Activated CD4-positive, alpha-beta memory T cell treated with anti-CD3 and anti-CD28 coated beads, Interleukin-2, amount 10 ng/mL, durations not matched to agents 7 days and 5 days (primary cell): ENCODE measurements at regions of chr14 and their contacts with region 1.

Region 1: DNA sequence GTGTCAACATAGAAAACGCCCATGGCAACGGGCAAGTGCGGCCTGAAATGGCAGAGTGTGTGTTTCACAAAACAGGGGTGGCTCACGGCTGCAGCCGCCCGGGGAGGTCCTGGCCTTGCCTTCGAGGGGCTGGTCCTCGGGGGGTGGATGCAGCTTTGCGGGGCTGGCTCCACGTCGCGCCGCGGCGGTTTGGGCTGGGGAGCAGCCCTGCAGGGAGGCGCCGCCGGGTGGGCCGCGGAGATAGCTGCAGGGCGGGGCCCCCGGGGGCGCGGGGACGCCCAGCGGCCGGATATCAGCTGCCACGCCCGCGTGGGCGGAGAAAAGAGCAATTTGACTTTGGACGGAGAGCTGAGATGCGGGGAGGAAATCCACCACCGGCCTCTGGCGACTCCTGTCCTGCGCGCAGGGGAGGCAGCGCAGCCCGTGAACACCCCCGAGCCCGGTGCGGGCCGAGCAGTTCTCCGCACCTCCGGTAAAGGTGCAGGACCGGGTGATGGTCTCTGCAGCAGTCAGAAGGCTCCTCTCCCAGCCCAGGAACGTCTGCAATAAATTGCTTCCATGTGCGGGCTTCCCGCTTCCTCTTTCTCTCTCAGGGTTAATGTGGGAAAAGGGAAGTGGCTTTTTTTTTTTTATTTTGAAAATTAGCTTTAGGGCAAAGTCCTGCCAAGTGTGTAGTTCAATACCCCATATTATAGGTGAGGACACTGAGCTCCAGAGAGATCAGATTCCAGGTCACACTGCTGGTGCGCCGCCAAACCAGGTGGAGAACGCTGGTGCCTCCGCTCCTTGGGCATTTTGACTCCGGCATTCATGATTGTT is 110.5 kb downstream of the ARF6 start:
- DNase-seq: peak; percentile 88
- H3K4me3 Mint-ChIP-seq: peak overlapping the region; percentile 77
- H3K27ac Mint-ChIP-seq: peak overlapping the region; percentile 98
- H3K4me1 Mint-ChIP-seq: peaks cover 76% of the 10 kb centered on the region
- H3K27me3 Mint-ChIP-seq: no peaks in the 10 kb centered on the region

Region 2: DNA sequence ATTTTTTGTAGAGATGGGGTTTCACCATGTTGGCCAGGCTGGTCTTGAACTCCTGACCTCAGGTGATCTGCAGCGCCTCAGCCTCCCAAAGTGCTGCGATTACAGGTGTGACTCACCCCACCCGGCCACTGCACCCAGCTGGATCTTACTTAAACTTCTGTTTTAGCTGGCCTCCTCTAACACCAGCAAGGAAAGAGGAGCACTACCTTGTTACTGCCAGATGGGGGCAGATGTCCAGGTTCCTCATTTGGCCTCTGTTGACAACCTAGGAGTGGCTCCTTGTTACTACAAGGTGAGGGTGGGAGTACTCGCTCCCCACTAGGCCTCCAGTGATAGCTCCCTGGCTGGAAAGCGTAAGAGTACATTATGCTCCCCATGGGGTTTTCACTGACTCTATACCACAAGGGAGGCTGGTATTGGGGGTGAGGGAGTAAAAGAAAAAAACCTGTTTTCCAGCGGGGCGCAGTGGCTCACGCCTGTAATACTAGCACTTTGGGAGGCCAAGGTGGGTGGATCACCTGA is 123.7 kb before region 1 on chr14:
- CTCF ChIA-PET with region 1: interaction called, 9 read pairs
- POLR2A ChIA-PET with region 1: interaction called, 56 read pairs
- DNase-seq: peak; percentile 76
- H3K4me3 Mint-ChIP-seq: no peak overlapping the region
- H3K27ac Mint-ChIP-seq: peak overlapping the region; percentile 50
- H3K4me1 Mint-ChIP-seq: peaks cover 48% of the 10 kb centered on the region
- H3K27me3 Mint-ChIP-seq: no peaks in the 10 kb centered on the region

Region 3: DNA sequence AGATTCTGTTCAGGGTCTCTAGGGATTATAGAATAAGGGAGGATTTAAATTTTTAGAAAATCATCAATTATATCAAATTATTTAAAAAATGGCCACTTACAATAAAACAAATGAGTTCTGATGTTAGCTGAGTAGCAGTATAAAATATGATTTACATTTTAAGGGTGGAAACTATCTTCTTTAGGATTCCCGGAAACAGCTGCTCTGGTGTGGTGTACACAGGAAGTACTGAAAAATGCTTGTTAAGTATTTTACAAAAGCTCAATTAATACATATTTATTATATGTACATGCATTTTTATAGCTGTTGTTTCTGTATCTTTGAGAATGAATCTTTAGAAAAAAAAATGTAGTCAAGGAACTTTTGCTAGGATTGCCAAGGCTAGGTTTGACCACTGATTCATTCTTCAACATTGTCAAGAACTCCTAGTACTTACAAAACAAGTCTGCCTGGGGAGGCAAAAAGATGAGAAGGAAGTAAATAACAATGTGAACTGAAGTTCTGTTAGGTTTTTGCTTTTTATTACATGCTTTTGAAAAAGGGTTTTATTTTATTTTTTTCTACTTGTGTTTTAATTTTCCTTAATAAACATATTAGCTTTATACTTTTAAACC is 62.5 kb before region 1 on chr14:
- CTCF ChIA-PET with region 1: interaction called, 6 read pairs
- POLR2A ChIA-PET with region 1: interaction called, 81 read pairs
- DNase-seq: peak; percentile 30
- H3K4me3 Mint-ChIP-seq: no peak overlapping the region
- H3K27ac Mint-ChIP-seq: peak overlapping the region; percentile 63
- H3K4me1 Mint-ChIP-seq: peaks cover 68% of the 10 kb centered on the region
- H3K27me3 Mint-ChIP-seq: no peaks in the 10 kb centered on the region

Region 4: DNA sequence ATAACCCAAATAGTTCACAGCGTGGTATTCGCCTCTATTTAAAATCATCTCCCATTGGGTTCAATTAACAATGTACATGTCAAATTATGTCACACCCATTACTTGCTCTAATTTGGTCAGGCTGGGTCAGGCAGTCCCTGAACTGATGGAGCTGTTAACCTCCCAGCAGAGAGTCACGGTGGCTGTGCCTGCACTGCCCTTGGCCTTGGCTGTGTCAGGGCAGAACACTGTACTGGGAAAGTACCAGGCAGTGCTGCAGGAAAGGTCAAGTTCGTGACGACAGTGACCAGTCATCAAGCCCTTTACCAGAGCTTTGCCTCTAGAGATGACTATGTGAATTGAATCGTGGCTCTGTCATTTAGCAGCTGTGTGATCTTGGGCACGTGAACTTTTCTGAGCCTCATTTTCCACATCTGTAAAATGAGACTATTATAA is 10.5 kb before region 1 on chr14:
- CTCF ChIA-PET with region 1: interaction called, 4 read pairs
- POLR2A ChIA-PET with region 1: interaction called, 65 read pairs
- DNase-seq: peak; percentile 39
- H3K4me3 Mint-ChIP-seq: peak overlapping the region; percentile 28
- H3K27ac Mint-ChIP-seq: peak overlapping the region; percentile 66
- H3K4me1 Mint-ChIP-seq: peaks cover 33% of the 10 kb centered on the region
- H3K27me3 Mint-ChIP-seq: no peaks in the 10 kb centered on the region

Region 5: DNA sequence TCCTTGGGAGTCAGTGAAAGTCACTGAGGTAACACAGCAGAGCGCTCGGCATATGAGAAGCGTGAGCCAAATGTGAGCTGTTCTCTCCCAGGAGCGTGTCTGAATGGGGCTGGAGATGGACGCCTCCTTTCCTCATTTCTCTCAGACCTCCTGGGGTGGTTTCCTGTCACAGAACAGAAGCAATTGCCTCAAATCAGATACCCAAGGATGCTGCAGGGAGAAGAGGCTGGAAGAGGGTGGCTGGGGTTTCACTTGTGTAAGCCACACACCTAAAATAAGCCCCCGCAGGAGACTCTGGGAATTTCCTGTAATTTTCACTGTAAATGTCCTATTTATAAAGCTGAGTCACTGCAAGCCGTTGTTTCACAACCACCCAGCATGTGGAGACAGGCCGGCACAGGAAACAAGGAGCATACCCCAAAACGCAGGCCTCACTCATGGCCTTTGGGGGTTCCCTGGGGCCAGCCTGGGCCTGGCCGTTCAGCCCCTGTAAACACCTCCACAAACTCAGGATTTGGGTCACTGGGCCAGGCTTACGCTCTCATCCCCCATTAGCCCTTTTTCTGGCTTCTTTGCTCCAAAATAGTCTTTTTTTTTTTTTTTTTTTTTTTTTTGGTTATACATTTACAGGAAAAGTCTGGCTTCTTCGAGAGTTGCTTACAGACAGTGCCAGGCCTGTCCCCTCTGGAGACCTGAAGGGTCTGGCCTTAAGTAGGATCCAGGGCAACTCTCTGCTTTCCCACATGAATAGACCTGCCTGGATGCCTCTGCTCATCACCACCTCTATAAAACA is 57.6 kb after region 1 on chr14:
- CTCF ChIA-PET with region 1: interaction called, 43 read pairs
- POLR2A ChIA-PET with region 1: interaction called, 356 read pairs
- DNase-seq: peak; percentile 59
- H3K4me3 Mint-ChIP-seq: peak overlapping the region; percentile 93
- H3K27ac Mint-ChIP-seq: peak overlapping the region; percentile 100
- H3K4me1 Mint-ChIP-seq: peaks cover 85% of the 10 kb centered on the region
- H3K27me3 Mint-ChIP-seq: no peaks in the 10 kb centered on the region

Region 6: GRCh38 chr14:50116181-50116956 is 112.9 kb after region 1 on chr14 and contains the start of gene VCPKMT:
- CTCF ChIA-PET with region 1: interaction called, 3 read pairs
- POLR2A ChIA-PET with region 1: interaction called, 33 read pairs
- DNase-seq: peak; percentile 97
- H3K4me3 Mint-ChIP-seq: peak within 1 kb of the TSS; percentile 99
- H3K27ac Mint-ChIP-seq: peak within 1 kb of the TSS; percentile 97
- H3K4me1 Mint-ChIP-seq: peaks cover 40% of the 10 kb centered on the region
- H3K27me3 Mint-ChIP-seq: no peaks in the 10 kb centered on the region
- total RNA-seq, gene VCPKMT: 7.5 to 9.5 TPM